GM12878 (cell line): ENCODE measurements at regions of chr16 and their contacts with region 1.

Region 1: DNA sequence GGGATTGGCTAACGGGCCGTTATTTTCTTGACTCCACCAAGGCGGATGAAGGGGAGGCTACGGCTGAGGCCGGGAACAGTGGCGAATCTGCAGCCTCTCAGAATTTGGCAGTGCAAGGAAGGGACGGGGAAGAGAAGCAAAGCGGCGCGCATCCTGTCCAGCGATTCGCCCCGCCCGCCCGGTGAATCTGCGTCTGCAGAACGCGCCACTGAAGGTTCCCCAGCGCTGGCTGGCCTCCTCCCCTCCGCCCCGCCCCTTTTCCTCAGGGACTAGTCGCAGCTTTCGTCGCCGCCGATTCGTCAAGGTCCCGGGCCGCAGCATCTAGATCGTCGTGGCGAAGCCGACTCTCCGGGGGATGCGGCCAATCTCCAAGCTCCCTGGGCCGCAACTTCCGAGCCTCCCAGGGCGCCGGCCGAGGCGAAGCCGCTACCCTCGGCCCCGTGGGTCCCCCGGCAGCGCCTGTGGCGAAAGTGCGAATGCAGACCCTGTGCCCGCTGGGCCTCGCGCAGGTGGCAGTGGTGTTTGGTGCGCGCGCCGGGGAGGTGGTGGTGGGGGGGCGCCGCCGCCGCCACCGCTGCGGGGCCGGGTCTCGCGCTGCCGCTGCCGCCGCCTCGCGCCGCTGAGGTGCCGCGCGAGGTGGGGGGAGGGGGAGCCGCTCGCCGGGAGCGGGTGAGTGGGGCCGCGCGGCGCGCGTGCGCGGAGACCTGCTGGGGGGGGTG is at the start of gene SETD1A:
- DNase-seq: peak; percentile 57
- ATAC-seq: peak; percentile 92
- H3K4me3 ChIP-seq: peak within 1 kb of the TSS; percentile 92
- H3K27ac ChIP-seq: peak within 1 kb of the TSS; percentile 100
- H3K4me1 ChIP-seq: peaks cover 13% of the 10 kb centered on the region
- H3K27me3 ChIP-seq: no peaks in the 10 kb centered on the region
- CTCF ChIP-seq: no peak
- EP300 ChIP-seq: peak in 1 of 2 experiments; percentile 99; a peak in 2 of 4 replicates
- POLR2A ChIP-seq: peak; percentile 75
- RAD21 ChIP-seq: no peak
- polyA plus RNA-seq, gene SETD1A: 0.02 to 0.18 TPM

Region 2: DNA sequence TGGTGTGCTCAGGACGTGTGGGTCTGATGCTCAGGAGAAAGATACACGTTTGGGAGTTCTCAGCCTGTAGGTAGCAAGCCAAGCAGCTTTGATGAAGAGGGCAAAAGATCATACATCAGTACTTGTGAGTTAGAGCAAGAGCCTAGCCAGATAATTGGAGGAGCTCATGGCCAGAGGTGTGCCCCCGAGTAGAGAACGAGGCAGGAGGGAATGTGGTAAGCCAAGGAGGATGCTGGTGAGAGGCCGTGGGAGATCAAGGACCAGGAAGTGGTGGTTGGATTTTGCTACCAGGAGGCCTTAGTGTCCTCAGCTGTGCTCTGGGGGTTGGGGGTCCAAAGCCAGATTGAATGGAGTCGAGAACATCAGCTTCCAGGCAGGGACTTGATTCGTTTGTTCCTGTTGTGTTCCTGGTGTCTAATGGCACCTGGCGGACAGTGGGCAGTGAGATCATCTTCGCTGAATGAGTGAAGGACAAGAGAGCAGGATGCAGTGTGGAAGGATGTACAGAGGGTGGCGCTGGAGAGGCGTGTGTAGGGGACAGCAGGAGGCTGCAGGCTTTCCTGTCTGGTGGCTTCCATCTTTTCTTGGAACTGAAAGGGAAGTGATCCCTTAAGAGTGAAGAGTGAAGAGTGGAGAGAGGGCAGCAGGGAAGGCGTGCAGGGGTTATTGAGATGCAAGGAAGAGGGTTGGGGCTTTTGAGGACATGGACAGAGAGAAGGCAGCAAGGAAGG is 22.6 kb before region 1 on chr16:
- CTCF ChIA-PET with region 1: interaction called, 14 read pairs
- POLR2A ChIA-PET with region 1: no interaction called
- RAD21 ChIA-PET with region 1: no interaction called
- SMC1A ChIA-PET with region 1: interaction called, 3 read pairs
- in situ Hi-C with region 1: no loop called
- intact Hi-C with region 1: no loop called
- DNase-seq: no peak
- ATAC-seq: peak; percentile 63
- H3K4me3 ChIP-seq: no peak overlapping the region
- H3K27ac ChIP-seq: no peak overlapping the region
- H3K4me1 ChIP-seq: no peaks in the 10 kb centered on the region; the same call in 1 of the 2 replicates
- H3K27me3 ChIP-seq: no peaks in the 10 kb centered on the region
- CTCF ChIP-seq: peak; percentile 48 to 58 (median 58); a peak in 5 of 6 replicates
- EP300 ChIP-seq: no peak
- POLR2A ChIP-seq: 0 out of 2 replicates have a peak, but pooled peaks have one; percentile 12
- RAD21 ChIP-seq: peak; percentile 30; the same call in 1 of the 2 replicates

Region 3: DNA sequence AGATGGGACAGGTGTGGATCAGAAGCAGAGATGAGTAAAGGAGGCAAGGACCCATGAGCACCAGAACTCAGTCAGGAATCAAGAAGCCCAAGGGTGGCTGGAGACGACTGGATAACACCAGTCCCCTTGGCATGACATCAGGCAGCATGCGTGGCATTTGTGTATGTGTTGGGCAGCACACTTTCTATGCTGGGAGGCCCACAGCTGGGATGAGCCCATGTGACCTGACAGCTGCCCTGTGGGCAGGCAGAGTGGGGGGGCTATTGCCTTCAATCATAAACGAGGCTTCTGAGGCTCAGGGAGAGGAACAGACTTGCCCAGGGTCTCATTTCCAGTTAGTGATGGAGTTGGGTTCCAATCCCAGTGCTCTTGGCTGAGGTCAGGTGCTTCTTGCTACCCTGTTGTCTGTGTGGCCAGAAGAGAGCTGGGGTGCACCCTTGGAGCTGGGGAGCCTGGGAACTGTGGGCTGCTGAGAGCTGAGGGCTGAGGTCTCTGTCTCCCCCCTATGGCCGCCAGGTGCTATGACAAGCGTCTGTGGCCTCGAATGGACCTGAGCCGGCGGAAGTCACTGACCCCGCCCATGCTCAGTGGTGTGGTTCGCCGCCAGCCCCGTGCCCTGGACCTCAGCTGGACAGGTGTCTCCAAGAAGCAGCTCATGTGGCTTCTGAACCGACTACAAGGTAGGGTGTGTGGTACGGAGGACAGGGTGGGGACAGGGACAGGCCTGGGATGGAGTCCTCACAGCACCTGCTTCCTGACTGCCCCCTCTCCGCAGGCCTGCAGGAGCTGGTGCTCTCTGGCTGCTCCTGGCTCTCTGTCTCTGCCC is 15.8 kb before region 1 on chr16:
- CTCF ChIA-PET with region 1: interaction called, 37 read pairs
- POLR2A ChIA-PET with region 1: no interaction called
- RAD21 ChIA-PET with region 1: interaction called, 5 read pairs
- SMC1A ChIA-PET with region 1: interaction called, 9 read pairs
- in situ Hi-C with region 1: no loop called
- intact Hi-C with region 1: no loop called
- DNase-seq: no peak
- ATAC-seq: peak; percentile 99
- H3K4me3 ChIP-seq: no peak overlapping the region
- H3K27ac ChIP-seq: no peak overlapping the region
- H3K4me1 ChIP-seq: peaks cover 9% of the 10 kb centered on the region
- H3K27me3 ChIP-seq: no peaks in the 10 kb centered on the region
- CTCF ChIP-seq: peak; percentile 94 to 99 (median 95)
- EP300 ChIP-seq: no peak
- POLR2A ChIP-seq: no peak
- RAD21 ChIP-seq: peak; percentile 67

Region 4: GRCh38 chr16:31094424-31095120 is 137.0 kb after region 1 on chr16 and contains the start of gene VKORC1:
- CTCF ChIA-PET with region 1: interaction called, 27 read pairs
- POLR2A ChIA-PET with region 1: no interaction called
- RAD21 ChIA-PET with region 1: interaction called, 5 read pairs
- SMC1A ChIA-PET with region 1: interaction called, 6 read pairs
- in situ Hi-C with region 1: no loop called
- intact Hi-C with region 1: loop called (anchors 10 kb)
- DNase-seq: peak; percentile 87
- ATAC-seq: peak; percentile 89
- H3K4me3 ChIP-seq: peak within 1 kb of the TSS; percentile 99
- H3K27ac ChIP-seq: peak within 1 kb of the TSS; percentile 81
- H3K4me1 ChIP-seq: peaks cover 8% of the 10 kb centered on the region
- H3K27me3 ChIP-seq: no peaks in the 10 kb centered on the region
- CTCF ChIP-seq: no peak
- EP300 ChIP-seq: no peak
- POLR2A ChIP-seq: peak; percentile 79
- RAD21 ChIP-seq: no peak
- polyA plus RNA-seq, gene VKORC1: 19.8 to 39.0 TPM

Region 5: GRCh38 chr16:31440516-31441184 is 483.0 kb after region 1 on chr16:
- CTCF ChIA-PET with region 1: interaction called, 19 read pairs
- POLR2A ChIA-PET with region 1: no interaction called
- RAD21 ChIA-PET with region 1: no interaction called
- SMC1A ChIA-PET with region 1: interaction called, 5 read pairs
- in situ Hi-C with region 1: no loop called
- intact Hi-C with region 1: loop called (anchors 1 kb)
- DNase-seq: no peak
- ATAC-seq: no peak
- H3K4me3 ChIP-seq: no peak overlapping the region
- H3K27ac ChIP-seq: no peak overlapping the region
- H3K4me1 ChIP-seq: no peaks in the 10 kb centered on the region
- H3K27me3 ChIP-seq: no peaks in the 10 kb centered on the region
- CTCF ChIP-seq: no peak
- EP300 ChIP-seq: no peak
- POLR2A ChIP-seq: no peak
- RAD21 ChIP-seq: no peak

Region 6: GRCh38 chr16:31713071-31713944 is 755.7 kb after region 1 on chr16:
- CTCF ChIA-PET with region 1: interaction called, 3 read pairs
- POLR2A ChIA-PET with region 1: no interaction called
- RAD21 ChIA-PET with region 1: no interaction called
- SMC1A ChIA-PET with region 1: no interaction called
- in situ Hi-C with region 1: loop called (anchors 10 kb)
- intact Hi-C with region 1: no loop called
- DNase-seq: peak; percentile 79
- ATAC-seq: peak; percentile 94
- H3K4me3 ChIP-seq: peak overlapping the region; percentile 75
- H3K27ac ChIP-seq: peak overlapping the region; percentile 96
- H3K4me1 ChIP-seq: peaks cover 6% of the 10 kb centered on the region
- H3K27me3 ChIP-seq: no peaks in the 10 kb centered on the region
- CTCF ChIP-seq: no peak
- EP300 ChIP-seq: no peak
- POLR2A ChIP-seq: peak; percentile 97
- RAD21 ChIP-seq: no peak

Region 7: DNA sequence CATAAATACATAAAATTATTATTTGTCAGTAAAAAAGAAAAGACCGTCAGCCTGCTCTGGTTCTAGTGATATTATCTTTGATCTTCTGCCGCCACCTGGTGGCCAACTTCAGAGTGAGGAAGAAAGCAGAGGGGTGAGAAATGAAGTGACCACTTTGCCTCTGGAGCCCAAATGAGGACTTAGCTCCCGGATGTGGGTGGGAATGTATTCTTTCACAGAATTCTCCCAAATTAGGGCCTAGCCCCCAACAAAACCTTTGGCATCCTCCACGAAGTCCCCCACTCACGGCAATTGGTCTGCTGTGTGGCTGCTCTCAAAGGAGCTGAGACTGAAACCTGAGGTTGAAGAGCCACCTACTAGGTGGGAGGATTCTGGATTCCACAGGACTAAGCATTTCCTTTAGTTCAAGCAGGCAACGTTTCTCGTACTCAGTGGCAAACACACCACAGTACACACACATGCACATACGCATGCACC is 911.1 kb after region 1 on chr16:
- CTCF ChIA-PET with region 1: interaction called, 15 read pairs
- POLR2A ChIA-PET with region 1: interaction called, 4 read pairs
- RAD21 ChIA-PET with region 1: no interaction called
- SMC1A ChIA-PET with region 1: no interaction called
- in situ Hi-C with region 1: loop called (anchors 10 kb)
- intact Hi-C with region 1: loop called (anchors 10 kb)
- DNase-seq: no peak
- ATAC-seq: peak; percentile 78
- H3K4me3 ChIP-seq: peak overlapping the region; percentile 28; the same call in 1 of the 2 replicates
- H3K27ac ChIP-seq: no peak overlapping the region
- H3K4me1 ChIP-seq: peaks cover 24% of the 10 kb centered on the region
- H3K27me3 ChIP-seq: no peaks in the 10 kb centered on the region
- CTCF ChIP-seq: peak; percentile 59 to 71 (median 70)
- EP300 ChIP-seq: no peak
- POLR2A ChIP-seq: no peak
- RAD21 ChIP-seq: peak; percentile 87